ENCODE measurements at regions of chr9 and their contacts with region 1.

Region 1: GRCh38 chr9:73200694-73201452 is 49.2 kb downstream of the ANXA1 start:
- DNase-seq: peak; percentile 28
- ATAC-seq: peak; percentile 59
- H3K4me3 ChIP-seq: no peak overlapping the region
- H3K27ac ChIP-seq: no peak overlapping the region
- H3K4me1 ChIP-seq: peaks cover 5 to 10% of the 10 kb centered on the region in 2 experiments; a peak in 2 of 4 replicates
- H3K27me3 ChIP-seq: no peaks in the 10 kb centered on the region
- CTCF ChIP-seq: peak; percentile 39 to 72 (median 70); a peak in 4 of 6 replicates
- POLR2A ChIP-seq: no peak
- RAD21 ChIP-seq: peak; percentile 78

Region 2: GRCh38 chr9:72856972-72857623 is 343.8 kb before region 1 on chr9:
- CTCF ChIA-PET with region 1: interaction called, 14 read pairs
- POLR2A ChIA-PET with region 1: interaction called, 3 read pairs
- RAD21 ChIA-PET with region 1: interaction called, 3 to 7 read pairs
- intact Hi-C with region 1: loop called (anchors 5 kb)
- DNase-seq: peak; percentile 65
- ATAC-seq: peak; percentile 79
- H3K4me3 ChIP-seq: no peak overlapping the region
- H3K27ac ChIP-seq: no peak overlapping the region
- H3K4me1 ChIP-seq: peaks cover 8 to 21% of the 10 kb centered on the region in 2 experiments; a peak in 3 of 4 replicates
- H3K27me3 ChIP-seq: no peaks in the 10 kb centered on the region
- CTCF ChIP-seq: peak; percentile 60 to 81 (median 68); a peak in 5 of 6 replicates
- POLR2A ChIP-seq: no peak
- RAD21 ChIP-seq: peak; percentile 65

Region 3: DNA sequence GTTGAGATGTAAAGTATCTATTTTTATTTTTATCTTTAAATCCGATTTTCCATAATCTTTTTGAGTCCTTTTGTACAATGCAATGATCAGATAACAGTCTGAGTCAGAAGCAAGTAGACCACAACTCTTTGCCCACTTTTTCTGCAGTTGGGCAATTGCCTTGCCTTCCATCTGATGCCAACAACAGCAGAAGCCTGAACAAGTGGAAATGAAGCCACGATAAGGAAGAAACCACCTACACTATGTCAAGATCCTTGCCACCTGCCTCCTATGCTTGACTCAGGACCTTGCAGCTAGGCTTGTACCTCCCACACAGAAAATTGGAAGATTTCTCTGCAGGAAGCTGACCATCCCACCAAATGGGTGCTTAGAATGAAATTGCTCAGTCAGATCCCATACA is 29.4 kb after region 1 on chr9:
- CTCF ChIA-PET with region 1: no interaction called
- POLR2A ChIA-PET with region 1: no interaction called
- RAD21 ChIA-PET with region 1: no interaction called
- intact Hi-C with region 1: no loop called
- DNase-seq: no peak
- ATAC-seq: no peak
- H3K4me3 ChIP-seq: no peak overlapping the region
- H3K27ac ChIP-seq: no peak overlapping the region
- H3K4me1 ChIP-seq: no peaks in the 10 kb centered on the region
- H3K27me3 ChIP-seq: peaks cover 51% of the 10 kb centered on the region
- CTCF ChIP-seq: no peak
- POLR2A ChIP-seq: no peak
- RAD21 ChIP-seq: no peak

Region 4: GRCh38 chr9:73269430-73270101 is 68.7 kb after region 1 on chr9:
- CTCF ChIA-PET with region 1: interaction called, 10 read pairs
- POLR2A ChIA-PET with region 1: no interaction called
- RAD21 ChIA-PET with region 1: no interaction called
- intact Hi-C with region 1: no loop called
- DNase-seq: peak; percentile 6
- ATAC-seq: peak; percentile 59
- H3K4me3 ChIP-seq: no peak overlapping the region
- H3K27ac ChIP-seq: no peak overlapping the region
- H3K4me1 ChIP-seq: 0 out of 4 replicates have a peak, but pooled peaks cover 0 to 5% of the 10 kb centered on the region in 2 experiments
- H3K27me3 ChIP-seq: 0 out of 2 replicates have a peak, but pooled peaks cover 9% of the 10 kb centered on the region
- CTCF ChIP-seq: peak; percentile 30 to 58 (median 33); a peak in 4 of 6 replicates
- POLR2A ChIP-seq: no peak
- RAD21 ChIP-seq: peak; percentile 57

Region 5: GRCh38 chr9:73667717-73668116 is 466.8 kb after region 1 on chr9:
- CTCF ChIA-PET with region 1: interaction called, 4 read pairs
- POLR2A ChIA-PET with region 1: no interaction called
- RAD21 ChIA-PET with region 1: no interaction called
- intact Hi-C with region 1: loop called (anchors 5 kb)
- DNase-seq: no peak
- ATAC-seq: peak; percentile 79
- H3K4me3 ChIP-seq: no peak overlapping the region
- H3K27ac ChIP-seq: no peak overlapping the region
- H3K4me1 ChIP-seq: no peaks in the 10 kb centered on the region
- H3K27me3 ChIP-seq: peaks cover 16% of the 10 kb centered on the region
- CTCF ChIP-seq: peak in 2 of 3 experiments; percentile 31 to 35; a peak in 2 of 6 replicates
- POLR2A ChIP-seq: no peak
- RAD21 ChIP-seq: no peak

Region 6: GRCh38 chr9:74570879-74571512 is 1370.1 kb after region 1 on chr9:
- CTCF ChIA-PET with region 1: interaction called, 18 read pairs
- POLR2A ChIA-PET with region 1: no interaction called
- RAD21 ChIA-PET with region 1: no interaction called
- intact Hi-C with region 1: loop called (anchors 1 kb)
- DNase-seq: peak; percentile 16
- ATAC-seq: no peak
- H3K4me3 ChIP-seq: no peak overlapping the region
- H3K27ac ChIP-seq: no peak overlapping the region
- H3K4me1 ChIP-seq: no peaks in the 10 kb centered on the region
- H3K27me3 ChIP-seq: peaks cover 37% of the 10 kb centered on the region
- CTCF ChIP-seq: peak; percentile 31 to 72 (median 67); a peak in 4 of 6 replicates
- POLR2A ChIP-seq: no peak
- RAD21 ChIP-seq: peak; percentile 62

Region 7: DNA sequence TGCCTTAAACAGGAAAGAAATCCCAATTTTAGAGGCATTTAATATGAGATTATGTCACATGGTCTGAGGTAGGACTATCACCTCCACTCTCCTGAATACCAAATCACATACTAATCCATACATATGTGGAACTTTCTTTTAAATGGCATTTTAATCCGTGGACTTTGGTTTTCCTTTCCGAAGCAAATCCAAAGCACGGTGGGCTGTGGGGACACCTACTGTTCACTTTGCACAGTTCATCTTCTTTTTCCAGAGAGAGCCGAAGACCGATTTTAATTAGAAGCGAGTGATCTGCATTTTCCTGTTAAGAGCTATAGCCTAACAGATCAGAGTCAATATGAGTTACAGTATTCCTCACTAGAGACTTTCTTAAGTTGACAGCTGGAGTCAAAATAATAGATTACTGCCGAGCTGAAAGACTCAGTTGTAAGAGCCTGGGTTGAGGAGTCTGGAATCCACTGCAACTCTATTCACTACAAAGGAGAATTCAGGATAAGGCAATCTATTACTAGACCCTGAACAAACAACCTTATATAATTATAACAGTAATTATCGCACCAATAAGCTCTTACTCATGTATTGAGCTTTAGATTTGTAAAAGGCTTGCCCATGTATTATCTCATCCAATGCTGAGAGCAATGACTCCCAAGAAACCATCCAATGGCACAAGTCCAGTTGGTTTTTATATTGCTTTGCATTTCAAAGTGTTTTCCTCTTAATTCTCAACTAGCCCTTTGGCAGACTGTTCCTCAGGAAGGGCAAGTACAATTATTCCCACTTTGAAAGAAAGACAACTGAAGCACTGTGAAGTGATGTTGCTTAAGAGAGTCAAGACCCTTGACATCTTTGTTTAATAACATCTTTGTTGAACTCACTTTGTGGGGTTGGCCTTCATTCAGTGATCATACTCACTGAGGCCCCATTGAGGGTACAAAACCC is 1542.2 kb after region 1 on chr9:
- CTCF ChIA-PET with region 1: interaction called, 3 read pairs
- POLR2A ChIA-PET with region 1: no interaction called
- RAD21 ChIA-PET with region 1: no interaction called
- intact Hi-C with region 1: loop called (anchors 2 kb)
- DNase-seq: peak; percentile 19
- ATAC-seq: peak; percentile 81
- H3K4me3 ChIP-seq: no peak overlapping the region
- H3K27ac ChIP-seq: no peak overlapping the region
- H3K4me1 ChIP-seq: no peaks in the 10 kb centered on the region
- H3K27me3 ChIP-seq: 0 out of 2 replicates have a peak, but pooled peaks cover 6% of the 10 kb centered on the region
- CTCF ChIP-seq: peak; percentile 50 to 88 (median 71); a peak in 5 of 6 replicates
- POLR2A ChIP-seq: no peak
- RAD21 ChIP-seq: peak; percentile 72

Measured in HCT116 (cell line).